ENCODE measurements at regions of chr14 and their contacts with region 1.

Region 1: DNA sequence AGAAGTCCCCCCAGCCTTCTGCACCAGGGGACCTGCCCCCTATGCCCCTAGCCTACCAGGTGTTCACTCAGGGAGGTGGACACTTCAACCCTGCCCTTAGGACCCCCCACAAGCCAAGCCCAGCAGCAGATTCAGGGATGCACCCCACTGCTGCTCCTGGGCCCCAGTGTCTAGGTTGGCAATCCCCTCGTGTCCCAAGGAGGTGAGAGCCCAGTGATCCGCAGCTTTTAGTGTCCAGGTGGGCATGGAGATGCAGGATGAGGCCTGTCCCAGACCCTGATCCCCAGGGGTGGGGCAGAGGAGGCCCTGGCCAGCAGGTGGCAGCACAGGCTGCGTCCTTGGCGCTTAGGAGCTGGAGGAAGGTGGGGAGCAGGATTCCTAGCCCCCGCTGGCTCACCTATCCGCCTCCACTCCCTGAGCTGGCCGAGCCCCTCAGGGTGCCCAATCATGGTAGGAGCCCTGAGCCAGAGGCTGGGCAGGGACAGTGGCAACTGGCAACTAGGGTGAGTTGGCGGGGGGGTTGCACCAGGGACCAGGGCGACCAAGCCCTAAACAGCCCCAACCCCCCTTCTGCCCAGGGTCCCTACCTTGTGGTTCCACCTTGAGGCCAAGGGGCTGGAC is 4.1 kb downstream of the CKB start:
- DNase-seq: peak; percentile 78 to 83
- H3K4me3 ChIP-seq: peak overlapping the region; percentile 95
- H3K4me3 Mint-ChIP-seq: peak overlapping the region; percentile 74
- H3K27ac Mint-ChIP-seq: peak overlapping the region; percentile 40
- H3K4me1 ChIP-seq: peaks cover 19% of the 10 kb centered on the region
- H3K4me1 Mint-ChIP-seq: peaks cover 7% of the 10 kb centered on the region
- H3K27me3 ChIP-seq: no peaks in the 10 kb centered on the region
- H3K27me3 Mint-ChIP-seq: no peaks in the 10 kb centered on the region
- CTCF ChIP-seq: peak; percentile 93 to 94

Region 2: GRCh38 chr14:103528587-103529382 is 10.3 kb after region 1 on chr14 and contains the start of gene TRMT61A:
- CTCF ChIA-PET with region 1: interaction called, 11 read pairs
- POLR2A ChIA-PET with region 1: no interaction called
- intact Hi-C with region 1: no loop called
- DNase-seq: peak; percentile 88 to 93
- H3K4me3 ChIP-seq: peak within 1 kb of the TSS; percentile 85
- H3K4me3 Mint-ChIP-seq: peak within 1 kb of the TSS; percentile 81
- H3K27ac Mint-ChIP-seq: peak within 1 kb of the TSS; percentile 85
- H3K4me1 ChIP-seq: peaks cover 51% of the 10 kb centered on the region
- H3K4me1 Mint-ChIP-seq: peaks cover 35% of the 10 kb centered on the region
- H3K27me3 ChIP-seq: no peaks in the 10 kb centered on the region
- H3K27me3 Mint-ChIP-seq: no peaks in the 10 kb centered on the region
- CTCF ChIP-seq: no peak
- total RNA-seq, gene TRMT61A: 20.8 and 22.3 TPM in 2 replicates

Region 3: GRCh38 chr14:103546652-103547454 is 28.3 kb after region 1 on chr14:
- CTCF ChIA-PET with region 1: interaction called, 49 read pairs
- POLR2A ChIA-PET with region 1: interaction called, 3 read pairs
- intact Hi-C with region 1: loop called (anchors 1 kb)
- DNase-seq: peak; percentile 73 to 85
- H3K4me3 ChIP-seq: no peak overlapping the region
- H3K4me3 Mint-ChIP-seq: no peak overlapping the region
- H3K27ac Mint-ChIP-seq: no peak overlapping the region
- H3K4me1 ChIP-seq: peaks cover 6% of the 10 kb centered on the region
- H3K4me1 Mint-ChIP-seq: no peaks in the 10 kb centered on the region
- H3K27me3 ChIP-seq: no peaks in the 10 kb centered on the region
- H3K27me3 Mint-ChIP-seq: no peaks in the 10 kb centered on the region
- CTCF ChIP-seq: peak; percentile 87

Measured in Caco-2 (cell line).